ENCODE measurements at regions of chr6 and their contacts with region 1.

Region 1: DNA sequence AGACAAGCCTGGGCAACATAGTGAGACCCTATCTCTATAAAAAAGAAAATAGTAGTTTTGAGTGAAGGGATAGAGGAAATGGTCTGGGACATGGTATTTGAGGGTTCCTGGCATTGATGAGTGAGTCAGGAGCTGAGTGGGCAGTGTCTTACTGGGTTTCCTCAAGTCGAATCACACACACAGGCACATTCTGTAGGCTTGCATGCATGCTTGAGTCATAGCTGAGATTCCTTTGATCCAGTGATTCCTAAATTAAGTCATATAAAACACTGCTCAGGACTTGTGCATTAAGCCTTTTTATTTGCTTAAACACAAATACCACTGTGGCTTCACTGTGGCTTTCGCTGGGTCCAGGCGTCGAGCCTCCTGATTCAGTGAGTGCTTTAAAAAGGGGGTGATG is 71.8 kb upstream of the TMEM181 start:
- DNase-seq: peak; percentile 88
- H3K4me3 ChIP-seq: no peak overlapping the region
- H3K27ac ChIP-seq: peak overlapping the region; percentile 84
- H3K27me3 ChIP-seq: no peaks in the 10 kb centered on the region
- CTCF ChIP-seq: no peak

Region 2: DNA sequence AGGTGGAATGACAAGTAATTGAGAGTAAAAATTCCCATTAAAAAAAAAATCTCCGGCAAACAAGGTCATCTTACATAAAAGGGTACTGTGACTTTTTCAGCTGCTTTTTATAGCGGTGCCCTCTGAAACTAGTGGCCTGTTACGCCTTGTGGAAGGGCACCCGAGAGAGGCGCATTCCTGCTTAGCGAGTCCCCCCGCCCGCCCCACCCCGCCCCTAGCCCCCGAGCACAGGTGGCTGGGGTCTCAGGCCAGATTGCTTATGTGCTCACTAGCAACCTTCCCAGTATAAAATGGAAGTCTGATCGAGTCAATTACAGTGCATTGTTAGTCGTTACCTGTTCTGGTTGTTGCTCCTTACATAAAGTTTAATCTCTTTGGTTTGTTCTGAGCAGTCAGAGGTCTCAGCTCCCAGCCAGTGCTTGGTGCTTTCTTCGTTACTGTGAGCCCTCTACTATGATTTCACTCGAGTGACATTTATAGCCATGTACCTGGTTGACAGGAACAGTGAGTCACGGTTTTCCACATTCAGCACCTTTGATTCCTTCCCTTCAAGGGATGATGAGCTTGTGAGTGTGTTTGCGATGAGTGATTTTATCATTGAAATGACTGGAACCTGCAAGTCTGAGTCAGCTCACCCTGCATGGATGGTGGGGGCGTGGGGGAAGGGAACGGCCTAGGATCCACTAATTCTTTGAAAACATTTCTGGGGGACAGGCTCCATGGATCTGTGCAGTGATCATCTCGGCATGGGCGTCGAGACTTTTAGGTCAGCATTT is 1059.5 kb before region 1 on chr6:
- CTCF ChIA-PET with region 1: no interaction called
- POLR2A ChIA-PET with region 1: interaction called, 11 read pairs
- DNase-seq: no peak
- H3K4me3 ChIP-seq: no peak overlapping the region
- H3K27ac ChIP-seq: no peak overlapping the region
- H3K27me3 ChIP-seq: peaks cover 19% of the 10 kb centered on the region
- CTCF ChIP-seq: no peak

Region 3: DNA sequence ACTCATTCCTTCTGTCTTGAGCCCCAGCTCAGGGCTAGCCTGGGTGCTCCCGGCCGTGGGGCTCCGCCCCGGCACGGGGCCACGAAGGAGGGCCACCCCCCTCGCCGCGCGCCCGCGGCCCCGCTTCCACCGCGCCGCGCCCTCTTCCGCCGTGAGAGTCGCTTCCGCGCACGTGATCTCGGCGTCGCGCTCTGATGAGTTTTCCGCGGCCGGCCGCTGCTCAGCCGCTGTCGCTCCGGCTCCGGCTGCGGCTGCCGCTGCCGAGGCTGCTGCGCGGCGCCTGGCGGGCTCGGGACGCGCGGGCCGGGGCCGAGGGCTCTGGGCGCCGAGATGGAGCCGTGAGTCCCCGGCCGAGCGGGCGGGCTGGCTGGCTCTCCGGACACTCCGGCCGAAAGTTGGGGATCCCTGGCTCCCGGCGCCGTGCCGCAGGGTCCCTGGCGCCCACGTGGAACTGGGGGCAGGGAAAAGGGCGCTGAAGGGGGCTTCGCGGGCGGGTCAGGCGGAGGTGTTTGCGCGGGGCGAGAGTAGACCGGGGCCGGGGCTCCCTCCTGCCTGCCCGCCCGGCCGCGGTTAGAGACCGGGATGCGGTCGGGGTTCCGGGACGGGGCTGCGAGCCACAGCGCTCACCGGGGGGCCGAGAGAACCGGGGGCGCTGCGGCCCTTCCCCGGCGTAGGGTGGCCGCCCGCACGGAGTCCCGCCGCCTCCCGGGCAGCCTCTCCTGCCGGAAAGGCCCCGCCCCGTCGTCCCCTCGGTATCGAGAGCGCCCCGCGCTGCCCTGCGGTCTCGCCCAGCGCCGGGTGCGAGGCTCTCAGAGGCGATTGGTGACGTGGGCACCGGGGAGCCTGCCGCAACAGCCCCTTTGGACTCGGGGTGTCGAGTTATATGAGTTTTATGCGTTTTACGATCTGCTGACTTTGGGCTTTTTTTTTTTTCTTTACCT is 72.1 kb after region 1 on chr6 and contains the start of gene TMEM181:
- CTCF ChIA-PET with region 1: no interaction called
- POLR2A ChIA-PET with region 1: no interaction called
- DNase-seq: peak; percentile 38
- H3K4me3 ChIP-seq: peak within 1 kb of the TSS; percentile 80
- H3K27ac ChIP-seq: peak within 1 kb of the TSS; percentile 73
- H3K27me3 ChIP-seq: no peaks in the 10 kb centered on the region
- CTCF ChIP-seq: no peak
- polyA plus RNA-seq, gene TMEM181: 33.3 and 44.1 TPM in 2 replicates